ENCODE measurements at regions of chr17 and their contacts with region 1.

Region 1: DNA sequence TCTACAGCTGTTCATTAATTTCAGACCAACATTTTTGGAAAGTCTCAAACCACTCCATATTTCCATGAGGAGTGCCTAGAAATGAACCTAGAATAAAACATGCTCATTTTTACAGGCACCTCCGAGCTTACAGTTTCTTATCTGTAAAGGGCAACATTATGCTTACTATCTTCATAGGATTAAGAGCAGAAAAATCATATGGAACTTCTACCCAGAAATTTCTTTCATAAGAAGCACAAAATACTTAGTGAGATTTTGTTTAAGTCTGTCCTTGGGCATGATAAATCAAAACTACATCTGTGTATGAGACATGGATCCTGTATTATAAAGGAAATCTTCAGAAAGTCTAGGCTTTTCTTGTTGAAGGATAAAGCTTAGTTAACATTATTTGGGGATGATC is 187.4 kb downstream of the CA10 start:
- DNase-seq: no peak
- ATAC-seq: no peak
- H3K4me3 ChIP-seq: no peak overlapping the region
- H3K27ac ChIP-seq: no peak overlapping the region
- H3K4me1 ChIP-seq: no peaks in the 10 kb centered on the region
- H3K27me3 ChIP-seq: no peaks in the 10 kb centered on the region
- CTCF ChIP-seq: no peak
- POLR2A ChIP-seq: no peak

Region 2: DNA sequence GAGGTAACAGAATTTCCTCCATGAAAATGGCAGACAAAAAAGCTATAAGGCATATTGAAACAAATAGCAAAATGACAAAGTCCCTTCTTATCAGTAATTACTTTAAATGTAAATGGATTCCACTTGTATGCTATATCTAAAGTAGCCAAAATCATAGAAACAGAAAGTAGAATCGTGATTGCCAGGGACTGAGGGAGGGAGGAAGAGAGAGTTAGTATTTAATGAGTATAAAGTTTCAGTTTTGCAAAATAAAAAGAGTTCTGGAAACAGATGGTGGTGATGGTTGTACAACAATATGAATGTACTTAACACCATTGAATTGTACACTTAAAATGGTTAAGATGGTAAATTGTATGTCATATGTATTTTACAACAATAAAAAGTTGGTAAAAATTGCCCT is 220.0 kb before region 1 on chr17:
- intact Hi-C with region 1: no loop called
- DNase-seq: no peak
- ATAC-seq: no peak
- H3K4me3 ChIP-seq: no peak overlapping the region
- H3K27ac ChIP-seq: no peak overlapping the region
- H3K4me1 ChIP-seq: no peaks in the 10 kb centered on the region
- H3K27me3 ChIP-seq: no peaks in the 10 kb centered on the region
- CTCF ChIP-seq: no peak
- POLR2A ChIP-seq: no peak

Region 3: GRCh38 chr17:51921500-51921899 is 49.6 kb before region 1 on chr17:
- intact Hi-C with region 1: loop called in 1 of 10 experiments (anchors 5 kb)
- DNase-seq: no peak
- ATAC-seq: no peak
- H3K4me3 ChIP-seq: no peak overlapping the region
- H3K27ac ChIP-seq: no peak overlapping the region
- H3K4me1 ChIP-seq: no peaks in the 10 kb centered on the region
- H3K27me3 ChIP-seq: no peaks in the 10 kb centered on the region
- CTCF ChIP-seq: no peak
- POLR2A ChIP-seq: no peak

Region 4: DNA sequence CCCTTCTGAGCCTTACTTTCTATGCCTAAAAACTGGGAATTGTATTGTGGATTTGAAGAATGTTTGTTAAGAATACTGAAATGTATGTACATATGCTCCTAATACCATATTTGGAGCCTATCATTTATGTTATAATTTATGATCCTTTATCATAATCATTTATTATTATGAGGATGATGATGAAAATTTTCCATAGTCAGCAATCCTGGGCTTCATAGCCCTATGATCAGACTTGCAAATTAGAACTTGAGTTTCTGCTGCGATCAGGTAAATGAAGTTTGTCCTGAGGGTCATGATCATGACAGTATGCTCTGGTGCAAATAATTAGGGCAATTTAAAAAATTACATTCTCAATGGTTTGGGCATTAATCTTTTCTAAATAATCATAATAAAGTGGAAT is 39.9 kb after region 1 on chr17:
- intact Hi-C with region 1: no loop called
- DNase-seq: no peak
- ATAC-seq: no peak
- H3K4me3 ChIP-seq: no peak overlapping the region
- H3K27ac ChIP-seq: no peak overlapping the region
- H3K4me1 ChIP-seq: no peaks in the 10 kb centered on the region
- H3K27me3 ChIP-seq: no peaks in the 10 kb centered on the region
- CTCF ChIP-seq: no peak
- POLR2A ChIP-seq: no peak

Region 5: GRCh38 chr17:52027620-52028295 is 56.6 kb after region 1 on chr17:
- intact Hi-C with region 1: loop called in 1 of 10 experiments (anchors 10 kb)
- DNase-seq: no peak
- ATAC-seq: no peak
- H3K4me3 ChIP-seq: no peak overlapping the region
- H3K27ac ChIP-seq: no peak overlapping the region
- H3K4me1 ChIP-seq: no peaks in the 10 kb centered on the region
- H3K27me3 ChIP-seq: no peaks in the 10 kb centered on the region
- CTCF ChIP-seq: no peak
- POLR2A ChIP-seq: no peak

Region 6: GRCh38 chr17:52064791-52065211 is 93.7 kb after region 1 on chr17:
- intact Hi-C with region 1: no loop called
- DNase-seq: no peak
- ATAC-seq: no peak
- H3K4me3 ChIP-seq: no peak overlapping the region
- H3K27ac ChIP-seq: no peak overlapping the region
- H3K4me1 ChIP-seq: no peaks in the 10 kb centered on the region
- H3K27me3 ChIP-seq: no peaks in the 10 kb centered on the region
- CTCF ChIP-seq: no peak
- POLR2A ChIP-seq: no peak

Region 7: DNA sequence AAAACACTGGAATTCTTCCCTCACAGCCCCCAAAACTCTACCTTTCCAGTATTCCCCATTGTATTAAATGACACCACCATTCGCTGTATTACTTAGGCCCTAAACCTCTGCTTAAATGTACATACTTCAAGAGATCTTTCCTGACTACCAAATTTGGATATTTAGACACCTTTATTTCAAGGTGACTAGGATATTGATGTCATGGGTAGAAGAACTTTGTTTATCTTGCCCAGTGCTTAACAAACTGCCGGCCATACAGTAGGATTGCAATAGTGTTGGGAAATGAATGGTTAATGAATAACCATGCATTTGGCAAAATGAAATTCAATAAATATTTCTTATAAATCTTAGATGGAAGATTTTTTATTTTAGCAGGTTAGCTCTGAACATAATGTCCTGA is 273.6 kb after region 1 on chr17:
- intact Hi-C with region 1: no loop called
- DNase-seq: no peak
- ATAC-seq: no peak
- H3K4me3 ChIP-seq: no peak overlapping the region
- H3K27ac ChIP-seq: no peak overlapping the region
- H3K4me1 ChIP-seq: no peaks in the 10 kb centered on the region
- H3K27me3 ChIP-seq: no peaks in the 10 kb centered on the region
- CTCF ChIP-seq: no peak
- POLR2A ChIP-seq: no peak